GM18951 (cell line): ENCODE measurements at regions of chr18 and their contacts with region 1.

Region 1: GRCh38 chr18:67217551-67218166 is 298.9 kb downstream of the DSEL start:
- POLR2A ChIP-seq: no peak

Region 2: GRCh38 chr18:66640431-66640830 is 577.2 kb before region 1 on chr18:
- in situ Hi-C with region 1: no loop called
- POLR2A ChIP-seq: no peak

Region 3: GRCh38 chr18:66838340-66838987 is 379.2 kb before region 1 on chr18:
- in situ Hi-C with region 1: no loop called
- POLR2A ChIP-seq: no peak

Region 4: GRCh38 chr18:67132919-67133318 is 84.7 kb before region 1 on chr18:
- in situ Hi-C with region 1: no loop called
- POLR2A ChIP-seq: no peak

Region 5: GRCh38 chr18:68660354-68661183 is 1442.9 kb after region 1 on chr18:
- in situ Hi-C with region 1: loop called (anchors 25 kb)
- POLR2A ChIP-seq: no peak